ENCODE measurements at regions of chr10 and their contacts with region 1.

Region 1: GRCh38 chr10:114334301-114334700 is 70.0 kb downstream of the AFAP1L2 start:
- DNase-seq: no peak
- H3K4me3 ChIP-seq: no peak overlapping the region
- H3K27ac ChIP-seq: no peak overlapping the region
- H3K4me1 ChIP-seq: peaks cover 3 to 8% of the 10 kb centered on the region in 2 donors
- H3K27me3 ChIP-seq: no peaks in the 10 kb centered on the region
- CTCF ChIP-seq: no peak
- POLR2A ChIP-seq: no peak

Region 2: DNA sequence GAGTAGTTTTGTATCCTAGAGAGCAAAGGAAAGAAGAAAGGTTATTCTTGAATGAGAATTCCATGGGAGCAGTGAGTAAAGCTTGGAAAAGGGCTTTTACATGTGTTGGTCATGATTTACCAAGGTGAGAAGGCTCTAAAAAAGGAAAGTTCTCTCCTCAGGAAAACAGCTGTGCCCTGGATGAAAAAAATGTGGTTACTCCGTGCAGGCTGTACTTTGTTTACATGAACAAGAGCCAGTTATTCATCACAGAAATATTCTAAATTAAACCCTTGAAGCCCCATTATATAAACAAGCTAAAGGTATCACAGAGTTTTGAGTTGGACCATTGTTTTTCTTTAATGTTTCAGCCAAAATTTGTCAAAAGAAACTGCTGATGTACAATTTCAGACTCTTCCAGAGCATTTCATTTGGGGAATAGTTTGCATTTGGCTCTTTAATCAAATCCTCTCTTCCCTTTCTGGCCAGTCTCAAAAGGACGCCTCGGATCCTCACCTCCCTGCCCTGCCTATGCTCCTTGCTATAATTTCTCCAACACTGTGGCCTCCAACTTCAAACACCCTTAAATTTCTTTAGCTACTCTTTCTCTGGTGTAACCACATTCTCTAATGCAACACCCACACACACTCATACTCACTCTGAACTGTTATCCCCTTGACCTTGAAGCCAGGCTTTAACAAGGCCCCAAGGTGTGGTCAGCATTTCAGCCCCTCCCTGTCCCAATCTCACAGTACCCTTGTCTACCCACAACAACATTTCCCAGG is 22.6 kb after region 1 on chr10:
- intact Hi-C with region 1: loop called (anchors 1 kb)
- DNase-seq: no peak
- H3K4me3 ChIP-seq: no peak overlapping the region
- H3K27ac ChIP-seq: peak overlapping the region; percentile 46 to 63
- H3K4me1 ChIP-seq: peaks cover 0 to 17% of the 10 kb centered on the region in 2 donors
- H3K27me3 ChIP-seq: no peaks in the 10 kb centered on the region
- CTCF ChIP-seq: no peak
- POLR2A ChIP-seq: no peak

Region 3: GRCh38 chr10:114379631-114380041 is 45.3 kb after region 1 on chr10:
- intact Hi-C with region 1: no loop called
- DNase-seq: no peak
- H3K4me3 ChIP-seq: no peak overlapping the region
- H3K27ac ChIP-seq: peak overlapping the region; percentile 38 to 62
- H3K4me1 ChIP-seq: peaks cover 0 to 16% of the 10 kb centered on the region in 2 donors
- H3K27me3 ChIP-seq: no peaks in the 10 kb centered on the region
- CTCF ChIP-seq: no peak
- POLR2A ChIP-seq: no peak

Measured in breast epithelium (tissue), 4 donors.